IMR-90 (cell line): ENCODE measurements at regions of chr6 and their contacts with region 1.

Region 1: DNA sequence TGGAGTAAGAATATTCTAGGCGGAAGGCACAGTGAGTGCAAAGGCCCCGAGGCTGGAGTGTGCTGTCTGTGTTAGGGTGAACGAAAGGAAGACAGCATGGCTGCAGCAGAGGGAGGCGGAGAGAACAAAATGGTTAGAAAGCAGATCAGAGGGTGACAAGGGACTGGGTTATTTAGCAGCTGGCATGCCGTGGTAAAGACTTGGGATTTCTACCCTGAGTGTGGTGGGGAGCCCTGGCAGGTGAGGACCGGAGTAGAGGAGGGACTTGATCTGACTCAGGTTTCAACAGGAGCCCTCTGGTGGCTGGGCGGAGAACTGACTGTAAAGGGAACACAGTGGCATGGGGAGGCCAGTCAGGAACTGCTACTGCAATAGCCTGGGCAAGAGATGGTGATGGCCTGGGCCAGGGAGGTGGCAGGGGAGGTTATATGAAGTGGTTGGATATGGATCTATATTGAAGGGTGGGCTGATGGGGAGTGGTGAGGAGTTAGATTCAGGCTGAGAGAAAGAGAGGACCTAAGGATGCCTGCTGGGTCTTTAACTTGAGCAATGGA is 38.0 kb downstream of the PIM1 start:
- DNase-seq: peak; percentile 70
- ATAC-seq: peak; percentile 86
- H3K4me3 ChIP-seq: no peak overlapping the region
- H3K27ac ChIP-seq: no peak overlapping the region
- H3K4me1 ChIP-seq: peaks cover 2% of the 10 kb centered on the region; the same call in 1 of the 2 replicates
- H3K27me3 ChIP-seq: no peaks in the 10 kb centered on the region
- CTCF ChIP-seq: peak; percentile 69
- POLR2A ChIP-seq: no peak
- RAD21 ChIP-seq: peak; percentile 67

Region 2: GRCh38 chr6:36914227-36914794 is 293.7 kb before region 1 on chr6:
- CTCF ChIA-PET with region 1: no interaction called
- POLR2A ChIA-PET with region 1: no interaction called
- dilution Hi-C with region 1: no loop called
- in situ Hi-C with region 1: no loop called
- intact Hi-C with region 1: no loop called
- DNase-seq: peak; percentile 56
- ATAC-seq: 0 out of 2 replicates have a peak, but pooled peaks have one; percentile 11
- H3K4me3 ChIP-seq: no peak overlapping the region
- H3K27ac ChIP-seq: no peak overlapping the region
- H3K4me1 ChIP-seq: peaks cover 26% of the 10 kb centered on the region
- H3K27me3 ChIP-seq: no peaks in the 10 kb centered on the region
- CTCF ChIP-seq: peak; percentile 31; the same call in 1 of the 2 replicates
- POLR2A ChIP-seq: no peak
- RAD21 ChIP-seq: peak; percentile 30

Region 3: DNA sequence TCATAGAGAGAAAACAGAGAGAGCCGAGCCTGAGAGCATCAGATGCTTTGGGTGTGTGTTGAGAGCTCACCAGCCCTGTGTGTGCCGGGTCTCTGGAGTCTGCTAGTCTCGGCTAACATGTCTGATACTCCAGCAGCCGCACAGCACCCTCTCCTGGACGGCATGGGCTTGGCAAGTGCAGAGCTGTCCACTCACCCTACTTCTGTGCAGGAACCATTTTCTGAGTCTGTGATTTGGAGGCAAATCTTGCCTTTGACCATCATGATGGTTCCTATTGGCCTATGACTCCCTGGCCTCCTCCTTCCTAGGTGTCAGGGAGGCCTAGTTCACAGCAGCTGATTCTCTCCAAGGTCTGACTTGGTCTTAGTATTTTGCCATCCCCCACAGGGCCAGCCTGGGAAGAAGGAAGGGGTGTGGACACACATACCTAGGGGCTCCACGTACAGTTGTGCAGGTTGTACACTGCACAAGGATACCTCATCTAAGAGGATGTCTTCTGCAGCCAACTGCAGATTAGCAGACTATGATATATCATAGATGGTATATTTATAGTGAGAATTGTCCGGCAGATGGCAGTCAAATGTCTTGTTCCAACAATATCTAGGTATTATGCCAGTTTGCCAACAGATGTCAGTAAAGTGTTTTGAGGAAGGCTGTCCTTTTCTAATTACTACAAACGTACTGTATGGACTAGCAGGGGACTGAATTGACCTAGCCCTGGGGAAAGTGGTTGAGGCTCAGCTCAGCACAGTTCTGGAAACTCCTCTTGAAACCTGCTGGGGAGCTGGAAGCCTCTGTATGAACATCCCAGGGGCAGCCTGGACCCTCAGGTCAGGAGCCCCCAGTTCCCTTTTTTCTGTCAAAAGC is 189.5 kb before region 1 on chr6:
- CTCF ChIA-PET with region 1: interaction called, 30 read pairs
- POLR2A ChIA-PET with region 1: interaction called, 3 read pairs
- dilution Hi-C with region 1: no loop called
- in situ Hi-C with region 1: loop called (anchors 5 kb)
- intact Hi-C with region 1: loop called (anchors 1 kb)
- DNase-seq: peak; percentile 87
- ATAC-seq: peak; percentile 99
- H3K4me3 ChIP-seq: no peak overlapping the region
- H3K27ac ChIP-seq: no peak overlapping the region
- H3K4me1 ChIP-seq: no peaks in the 10 kb centered on the region; the same call in 1 of the 2 replicates
- H3K27me3 ChIP-seq: no peaks in the 10 kb centered on the region
- CTCF ChIP-seq: peak; percentile 97
- POLR2A ChIP-seq: no peak
- RAD21 ChIP-seq: peak; percentile 96

Region 4: GRCh38 chr6:37029249-37029971 is 178.6 kb before region 1 on chr6:
- CTCF ChIA-PET with region 1: interaction called, 17 read pairs
- POLR2A ChIA-PET with region 1: interaction called, 3 read pairs
- dilution Hi-C with region 1: no loop called
- in situ Hi-C with region 1: loop called (anchors 5 kb)
- intact Hi-C with region 1: loop called (anchors 1 kb)
- DNase-seq: peak; percentile 88
- ATAC-seq: peak; percentile 99
- H3K4me3 ChIP-seq: no peak overlapping the region
- H3K27ac ChIP-seq: no peak overlapping the region
- H3K4me1 ChIP-seq: no peaks in the 10 kb centered on the region
- H3K27me3 ChIP-seq: no peaks in the 10 kb centered on the region; the same call in 1 of the 2 replicates
- CTCF ChIP-seq: peak; percentile 83
- POLR2A ChIP-seq: no peak
- RAD21 ChIP-seq: peak; percentile 88

Region 5: GRCh38 chr6:37051138-37052026 is 156.6 kb before region 1 on chr6:
- CTCF ChIA-PET with region 1: interaction called, 5 read pairs
- POLR2A ChIA-PET with region 1: no interaction called
- dilution Hi-C with region 1: no loop called
- in situ Hi-C with region 1: loop called (anchors 10 kb)
- intact Hi-C with region 1: loop called (anchors 1 kb)
- DNase-seq: peak; percentile 61
- ATAC-seq: peak; percentile 85
- H3K4me3 ChIP-seq: no peak overlapping the region
- H3K27ac ChIP-seq: no peak overlapping the region
- H3K4me1 ChIP-seq: peaks cover 6% of the 10 kb centered on the region
- H3K27me3 ChIP-seq: no peaks in the 10 kb centered on the region
- CTCF ChIP-seq: peak; percentile 95
- POLR2A ChIP-seq: peak; percentile 58
- RAD21 ChIP-seq: peak; percentile 95

Region 6: GRCh38 chr6:37473397-37474095 is 265.6 kb after region 1 on chr6:
- CTCF ChIA-PET with region 1: no interaction called
- POLR2A ChIA-PET with region 1: no interaction called
- dilution Hi-C with region 1: no loop called
- in situ Hi-C with region 1: no loop called
- intact Hi-C with region 1: no loop called
- DNase-seq: peak; percentile 33
- ATAC-seq: peak; percentile 51
- H3K4me3 ChIP-seq: no peak overlapping the region
- H3K27ac ChIP-seq: no peak overlapping the region
- H3K4me1 ChIP-seq: no peaks in the 10 kb centered on the region
- H3K27me3 ChIP-seq: no peaks in the 10 kb centered on the region
- CTCF ChIP-seq: no peak
- POLR2A ChIP-seq: no peak
- RAD21 ChIP-seq: no peak